ENCODE measurements at regions of chr5 and their contacts with region 1.

Region 1: DNA sequence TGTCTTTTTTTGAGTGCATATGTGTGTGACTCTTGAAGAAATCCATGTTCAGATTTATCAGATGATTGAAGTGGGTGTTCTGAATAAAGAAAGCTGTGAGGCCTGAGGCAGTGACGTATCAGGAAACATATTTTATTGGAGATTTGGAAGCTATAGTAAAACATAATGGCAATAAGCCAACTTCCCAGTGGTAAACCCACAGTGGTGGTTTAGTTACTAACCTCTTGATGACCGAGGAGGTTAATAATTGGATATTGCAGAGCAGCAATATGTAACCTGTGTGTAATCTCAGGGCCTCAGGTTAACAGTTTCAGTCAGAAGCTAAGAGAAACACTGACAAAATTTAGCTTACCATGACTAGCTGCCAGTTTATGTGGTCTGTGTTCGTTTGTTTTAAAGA is 6.9 kb downstream of the RGMB start:
- DNase-seq: no peak
- H3K4me3 ChIP-seq: no peak overlapping the region
- H3K27ac ChIP-seq: no peak overlapping the region
- H3K4me1 ChIP-seq: peaks cover 16% of the 10 kb centered on the region
- H3K27me3 ChIP-seq: no peaks in the 10 kb centered on the region
- CTCF ChIP-seq: no peak
- POLR2A ChIP-seq: no peak

Region 2: DNA sequence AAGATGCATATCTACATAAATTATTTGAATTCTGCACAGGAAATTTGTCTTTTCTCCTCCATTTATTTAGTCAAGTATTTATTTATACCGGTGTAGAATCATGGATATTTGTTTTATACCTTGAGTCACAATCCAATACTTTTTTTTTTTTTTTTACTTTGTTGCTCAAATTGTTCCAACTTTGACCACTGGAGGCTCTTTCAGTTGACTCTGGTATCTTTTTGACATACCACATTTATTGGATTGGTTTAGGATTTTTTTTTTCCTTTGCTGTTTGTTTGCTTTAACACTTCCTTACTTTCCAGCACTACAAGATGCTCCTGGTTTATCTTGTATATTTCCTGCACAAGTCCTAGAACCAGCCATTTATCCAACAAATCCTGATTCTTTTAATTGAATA is 1054.3 kb before region 1 on chr5:
- CTCF ChIA-PET with region 1: no interaction called
- POLR2A ChIA-PET with region 1: no interaction called
- dilution Hi-C with region 1: no loop called
- intact Hi-C with region 1: no loop called
- DNase-seq: no peak
- H3K4me3 ChIP-seq: no peak overlapping the region
- H3K27ac ChIP-seq: no peak overlapping the region
- H3K4me1 ChIP-seq: no peaks in the 10 kb centered on the region
- H3K27me3 ChIP-seq: no peaks in the 10 kb centered on the region
- CTCF ChIP-seq: no peak
- POLR2A ChIP-seq: no peak

Region 3: DNA sequence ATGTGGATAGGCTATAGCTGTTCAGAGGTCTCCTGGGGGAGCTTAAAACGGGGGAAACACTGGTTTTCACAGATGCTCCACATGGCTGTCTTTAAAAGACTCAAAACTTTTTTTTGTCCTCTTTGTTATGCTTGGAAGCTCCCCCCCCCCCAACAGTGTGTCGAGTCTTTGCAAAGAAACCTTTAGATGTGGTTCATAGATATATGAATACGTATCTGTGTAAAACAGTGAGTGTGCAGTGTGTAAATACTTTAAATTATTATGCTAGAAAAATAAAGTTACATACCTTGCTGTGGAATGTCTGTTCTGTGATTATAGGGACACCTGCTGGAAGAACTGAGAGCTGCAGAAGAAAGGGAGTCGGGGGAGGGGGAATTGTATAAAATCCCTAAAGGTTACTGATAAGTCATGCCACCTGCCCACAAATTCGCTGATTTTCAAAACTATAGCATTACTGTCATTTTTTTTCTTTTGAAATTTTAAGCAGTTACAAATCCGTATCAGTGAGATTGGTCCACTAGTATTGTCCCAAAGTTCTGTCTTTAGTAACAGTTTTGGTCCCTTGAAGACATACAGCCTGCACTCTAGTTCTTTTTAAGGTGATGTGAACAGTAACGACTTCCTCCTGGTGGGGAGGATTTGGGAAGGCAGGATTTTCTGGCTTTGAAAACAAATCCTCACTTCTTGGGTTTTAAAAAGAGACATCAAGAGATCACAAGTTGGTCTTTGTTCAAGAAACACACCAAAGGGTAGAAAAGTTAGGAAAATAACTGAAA is 16.0 kb after region 1 on chr5:
- CTCF ChIA-PET with region 1: interaction called, 14 read pairs
- POLR2A ChIA-PET with region 1: no interaction called
- dilution Hi-C with region 1: no loop called
- intact Hi-C with region 1: no loop called
- DNase-seq: peak; percentile 74
- H3K4me3 ChIP-seq: no peak overlapping the region
- H3K27ac ChIP-seq: peak overlapping the region; percentile 43
- H3K4me1 ChIP-seq: no peaks in the 10 kb centered on the region
- H3K27me3 ChIP-seq: no peaks in the 10 kb centered on the region
- CTCF ChIP-seq: peak; percentile 68 to 70
- POLR2A ChIP-seq: no peak

Measured in endothelial cell of umbilical vein (primary cell).